Activated T-helper 2 cell treated with anti-CD3 and anti-CD28 coated beads, Interferon-gamma antibody, Interleukin-2, Interleukin-4, amounts not matched to agents 10 μg/mL and 5 μg/mL and 100 μg/mL, durations not matched to agents 14 hours and 24 hours and 36 hours (primary cell): ENCODE measurements at regions of chr19 and their contacts with region 1.

Region 1: GRCh38 chr19:53867225-53868090 is at the start of gene MYADM:
- DNase-seq: peak; percentile 100
- H3K4me3 Mint-ChIP-seq: peak within 1 kb of the TSS; percentile 98
- H3K27ac Mint-ChIP-seq: peak within 1 kb of the TSS; percentile 98
- H3K4me1 Mint-ChIP-seq: peaks cover 28% of the 10 kb centered on the region
- H3K27me3 Mint-ChIP-seq: no peaks in the 10 kb centered on the region
- total RNA-seq, gene MYADM: 96.3 and 102 TPM in 2 replicates

Region 2: GRCh38 chr19:52189735-52190486 is 1677.5 kb before region 1 on chr19 and contains the start of gene PPP2R1A:
- intact Hi-C with region 1: loop called (anchors 5 kb)
- DNase-seq: peak; percentile 98
- H3K4me3 Mint-ChIP-seq: peak within 1 kb of the TSS; percentile 98
- H3K27ac Mint-ChIP-seq: peak within 1 kb of the TSS; percentile 99
- H3K4me1 Mint-ChIP-seq: peaks cover 32% of the 10 kb centered on the region
- H3K27me3 Mint-ChIP-seq: no peaks in the 10 kb centered on the region
- total RNA-seq, gene PPP2R1A: 218 and 225 TPM in 2 replicates

Region 3: GRCh38 chr19:52527134-52527955 is 1340.1 kb before region 1 on chr19 and contains the start of gene ZNF808:
- intact Hi-C with region 1: loop called (anchors 5 kb)
- DNase-seq: peak; percentile 87
- H3K4me3 Mint-ChIP-seq: peak within 1 kb of the TSS; percentile 96
- H3K27ac Mint-ChIP-seq: peak within 1 kb of the TSS; percentile 97
- H3K4me1 Mint-ChIP-seq: peaks cover 12% of the 10 kb centered on the region
- H3K27me3 Mint-ChIP-seq: no peaks in the 10 kb centered on the region
- total RNA-seq, gene ZNF808: 20.7 and 22.6 TPM in 2 replicates

Region 4: GRCh38 chr19:53600217-53600616 is 267.2 kb before region 1 on chr19:
- intact Hi-C with region 1: no loop called
- DNase-seq: no peak
- H3K4me3 Mint-ChIP-seq: no peak overlapping the region
- H3K27ac Mint-ChIP-seq: no peak overlapping the region
- H3K4me1 Mint-ChIP-seq: no peaks in the 10 kb centered on the region
- H3K27me3 Mint-ChIP-seq: no peaks in the 10 kb centered on the region

Region 5: GRCh38 chr19:53853707-53854106 is 13.8 kb before region 1 on chr19:
- intact Hi-C with region 1: loop called (anchors 1 kb)
- DNase-seq: no peak
- H3K4me3 Mint-ChIP-seq: no peak overlapping the region
- H3K27ac Mint-ChIP-seq: no peak overlapping the region
- H3K4me1 Mint-ChIP-seq: peaks cover 15% of the 10 kb centered on the region
- H3K27me3 Mint-ChIP-seq: peaks cover 17% of the 10 kb centered on the region

Region 6: DNA sequence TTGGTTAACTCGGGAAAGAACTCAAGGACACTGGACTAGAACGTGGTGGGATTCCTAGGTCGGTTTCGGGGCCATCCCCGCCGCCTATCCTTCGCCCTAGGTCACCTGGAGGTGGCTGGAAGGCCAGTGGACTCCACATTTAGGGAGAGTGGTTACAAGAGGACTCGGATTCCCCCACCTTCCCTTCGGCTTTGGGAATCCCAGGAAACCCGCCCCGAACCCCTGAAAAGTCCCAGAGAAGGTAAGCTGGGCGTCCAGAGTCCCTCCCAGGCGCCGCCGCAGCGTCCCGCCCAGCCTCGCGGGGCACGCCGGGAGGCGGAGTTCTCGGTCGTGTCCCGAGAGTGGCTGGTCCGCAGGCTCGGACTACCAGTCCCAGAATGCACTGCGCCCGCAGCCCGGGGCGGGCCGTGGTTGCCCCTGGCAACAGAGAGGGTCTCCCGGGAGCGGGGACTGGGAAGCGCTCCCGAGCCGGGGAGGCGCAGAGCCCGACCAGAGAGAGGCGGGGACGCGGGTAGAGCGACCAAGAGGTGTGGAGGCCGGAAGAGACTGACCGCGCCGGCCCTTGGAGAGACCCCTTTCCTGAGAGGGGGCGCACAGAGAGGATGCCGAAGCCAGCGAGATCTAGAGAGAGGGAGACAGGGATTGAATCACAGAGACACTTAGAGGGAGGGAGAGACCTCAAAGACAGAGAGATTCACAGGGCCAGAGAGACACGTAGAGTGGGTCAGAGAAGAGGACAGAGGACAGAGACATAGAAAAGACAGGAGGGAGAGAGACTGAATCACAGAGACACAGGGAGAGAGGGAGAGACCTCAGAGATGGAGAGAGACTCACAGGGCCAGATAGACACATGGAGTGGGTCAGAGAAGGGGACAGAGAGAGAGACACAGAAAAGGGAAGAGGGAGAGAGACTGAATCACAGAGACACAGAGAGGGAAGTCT is 12.0 kb after region 1 on chr19:
- intact Hi-C with region 1: loop called (anchors 1 kb)
- DNase-seq: peak; percentile 75
- H3K4me3 Mint-ChIP-seq: no peak overlapping the region
- H3K27ac Mint-ChIP-seq: no peak overlapping the region
- H3K4me1 Mint-ChIP-seq: peaks cover 33% of the 10 kb centered on the region
- H3K27me3 Mint-ChIP-seq: peaks cover 12% of the 10 kb centered on the region

Region 7: DNA sequence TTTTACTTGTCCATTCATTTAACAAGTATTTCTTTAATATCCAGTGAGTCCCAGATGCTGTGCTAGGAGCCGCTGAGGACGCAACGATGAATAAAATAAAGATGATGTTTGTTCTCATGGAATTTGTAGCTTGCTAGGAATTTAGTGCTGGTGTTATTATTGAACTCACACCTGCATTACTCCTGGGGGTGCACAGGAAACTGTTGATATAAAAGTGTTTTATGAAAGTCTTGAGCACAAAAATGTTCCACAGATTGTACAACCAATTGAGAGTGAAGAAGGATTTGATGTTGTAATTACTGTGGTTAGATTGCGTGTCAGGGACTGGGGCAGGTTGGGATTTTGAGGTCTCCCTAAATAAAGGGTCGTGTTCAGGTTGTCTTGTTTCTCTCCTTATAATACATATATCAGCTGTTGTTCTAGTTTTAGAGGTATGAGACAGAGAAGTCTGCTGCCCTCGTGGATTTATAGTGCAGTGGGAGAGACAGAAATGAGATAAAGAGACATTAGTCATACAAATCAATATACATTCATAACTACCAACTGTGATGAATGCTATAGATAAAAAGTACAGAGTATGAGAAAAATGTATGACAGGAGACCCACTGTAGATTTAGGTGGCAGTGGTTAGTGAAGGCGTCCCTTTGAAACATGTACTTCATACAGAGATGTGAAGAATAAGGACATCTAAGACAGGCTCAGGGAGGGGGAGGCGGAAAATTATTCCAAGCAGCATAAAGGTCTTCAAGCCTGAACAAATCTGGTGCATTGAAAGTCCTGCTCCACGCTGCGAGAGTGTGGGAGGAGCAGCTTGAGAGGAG is 135.2 kb after region 1 on chr19:
- intact Hi-C with region 1: no loop called
- DNase-seq: no peak
- H3K4me3 Mint-ChIP-seq: no peak overlapping the region
- H3K27ac Mint-ChIP-seq: no peak overlapping the region
- H3K4me1 Mint-ChIP-seq: no peaks in the 10 kb centered on the region
- H3K27me3 Mint-ChIP-seq: no peaks in the 10 kb centered on the region

Region 8: GRCh38 chr19:54102421-54103169 is 235.1 kb after region 1 on chr19 and contains the start of gene NDUFA3:
- intact Hi-C with region 1: loop called (anchors 5 kb)
- DNase-seq: peak; percentile 98
- H3K4me3 Mint-ChIP-seq: peak within 1 kb of the TSS; percentile 91
- H3K27ac Mint-ChIP-seq: peak within 1 kb of the TSS; percentile 79
- H3K4me1 Mint-ChIP-seq: peaks cover 8% of the 10 kb centered on the region
- H3K27me3 Mint-ChIP-seq: peaks cover 3% of the 10 kb centered on the region
- total RNA-seq, gene NDUFA3: 105 and 115 TPM in 2 replicates

Region 9: GRCh38 chr19:54189735-54190502 is 322.5 kb after region 1 on chr19:
- intact Hi-C with region 1: loop called (anchors 5 kb)
- DNase-seq: peak; percentile 100
- H3K4me3 Mint-ChIP-seq: peak overlapping the region; percentile 89
- H3K27ac Mint-ChIP-seq: peak overlapping the region; percentile 98
- H3K4me1 Mint-ChIP-seq: peaks cover 26% of the 10 kb centered on the region
- H3K27me3 Mint-ChIP-seq: no peaks in the 10 kb centered on the region